BJ (cell line): ENCODE measurements at regions of chr17 and their contacts with region 1.

Region 1: DNA sequence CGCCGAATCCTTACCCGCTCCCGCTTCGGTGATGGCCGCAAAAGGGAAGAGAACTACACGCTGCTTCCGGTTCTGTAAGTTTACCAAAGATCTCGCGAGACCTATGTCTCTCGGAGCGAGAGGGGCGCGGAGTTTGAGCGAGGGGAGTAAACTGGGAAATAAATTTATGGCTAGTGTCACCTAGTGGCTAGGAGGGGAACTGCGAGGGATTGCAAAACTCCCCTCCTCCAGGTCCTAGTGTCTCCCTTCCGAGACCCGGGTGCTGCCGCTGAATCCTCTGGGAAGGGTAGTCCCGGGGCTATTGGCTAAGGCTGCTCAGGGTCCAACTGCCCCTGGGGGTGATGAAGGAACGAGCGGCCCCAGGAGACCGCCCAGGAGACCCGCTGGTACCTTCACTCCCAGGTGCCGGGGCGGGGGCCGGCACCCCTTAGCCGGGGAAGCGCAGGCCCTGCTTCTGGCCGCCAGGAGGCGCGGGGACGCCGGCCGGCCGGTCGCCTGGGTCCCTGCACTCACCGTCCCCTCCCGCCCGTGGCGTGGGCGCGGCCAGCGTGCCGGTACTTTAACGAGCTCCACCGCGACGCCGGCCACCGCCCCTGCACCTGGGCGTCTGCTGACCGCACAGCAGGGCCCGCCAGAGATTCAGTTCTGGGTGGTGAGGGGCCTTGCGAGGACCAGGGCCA is at the start of gene RPL26:
- DNase-seq: peak; percentile 91
- H3K4me3 ChIP-seq: peak within 1 kb of the TSS; percentile 57
- H3K27me3 ChIP-seq: no peaks in the 10 kb centered on the region
- CTCF ChIP-seq: peak; percentile 90
- polyA plus RNA-seq, gene RPL26: 2,021 and 3,734 TPM in 2 replicates

Region 2: GRCh38 chr17:8326511-8327302 is 56.6 kb before region 1 on chr17:
- CTCF ChIA-PET with region 1: interaction called, 10 read pairs
- POLR2A ChIA-PET with region 1: no interaction called
- DNase-seq: no peak
- H3K4me3 ChIP-seq: peak overlapping the region; percentile 42
- H3K27me3 ChIP-seq: 0 out of 2 replicates have a peak, but pooled peaks cover 1% of the 10 kb centered on the region
- CTCF ChIP-seq: no peak

Region 3: DNA sequence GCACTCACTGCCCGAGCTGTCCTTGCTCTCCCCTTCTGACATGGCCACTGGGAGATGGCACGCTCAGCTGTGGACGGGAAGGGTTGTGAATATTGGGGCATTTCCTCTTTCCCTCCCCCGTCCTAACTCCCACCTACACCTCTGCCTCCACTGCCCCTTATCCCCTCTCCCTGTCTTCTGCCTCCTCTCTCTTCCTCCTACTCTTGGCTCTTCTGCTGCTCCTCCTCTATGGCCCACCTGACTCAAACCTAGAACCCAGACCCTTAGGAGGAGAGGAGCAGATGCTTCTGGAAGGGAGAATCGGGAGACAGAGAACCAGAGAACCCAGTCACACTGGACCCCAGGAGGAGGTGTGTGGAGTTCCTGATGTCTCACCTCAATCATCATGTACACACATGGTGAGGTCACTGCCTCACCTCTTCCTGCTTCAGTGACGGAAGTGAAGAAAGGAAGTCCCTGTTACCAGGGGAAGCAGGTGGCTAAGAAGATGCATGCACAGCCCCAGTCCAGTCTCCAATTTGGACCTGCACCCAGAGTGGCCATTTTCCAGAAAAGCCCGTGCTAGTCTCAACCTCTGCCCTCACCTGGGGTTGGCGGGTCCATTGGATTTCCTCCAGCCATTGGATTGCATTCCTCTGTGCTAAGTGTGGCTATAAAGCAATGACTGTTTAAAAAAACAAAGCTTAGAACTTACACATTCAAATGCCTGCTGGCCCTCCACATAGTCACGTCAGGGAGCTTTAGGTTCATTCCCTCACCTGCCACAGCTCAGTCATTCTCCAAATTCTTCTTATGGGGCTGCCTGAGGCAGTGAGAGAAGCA is 10.3 kb after region 1 on chr17:
- CTCF ChIA-PET with region 1: interaction called, 10 read pairs
- POLR2A ChIA-PET with region 1: no interaction called
- DNase-seq: no peak
- H3K4me3 ChIP-seq: no peak overlapping the region
- H3K27me3 ChIP-seq: peaks cover 9% of the 10 kb centered on the region
- CTCF ChIP-seq: no peak

Region 4: DNA sequence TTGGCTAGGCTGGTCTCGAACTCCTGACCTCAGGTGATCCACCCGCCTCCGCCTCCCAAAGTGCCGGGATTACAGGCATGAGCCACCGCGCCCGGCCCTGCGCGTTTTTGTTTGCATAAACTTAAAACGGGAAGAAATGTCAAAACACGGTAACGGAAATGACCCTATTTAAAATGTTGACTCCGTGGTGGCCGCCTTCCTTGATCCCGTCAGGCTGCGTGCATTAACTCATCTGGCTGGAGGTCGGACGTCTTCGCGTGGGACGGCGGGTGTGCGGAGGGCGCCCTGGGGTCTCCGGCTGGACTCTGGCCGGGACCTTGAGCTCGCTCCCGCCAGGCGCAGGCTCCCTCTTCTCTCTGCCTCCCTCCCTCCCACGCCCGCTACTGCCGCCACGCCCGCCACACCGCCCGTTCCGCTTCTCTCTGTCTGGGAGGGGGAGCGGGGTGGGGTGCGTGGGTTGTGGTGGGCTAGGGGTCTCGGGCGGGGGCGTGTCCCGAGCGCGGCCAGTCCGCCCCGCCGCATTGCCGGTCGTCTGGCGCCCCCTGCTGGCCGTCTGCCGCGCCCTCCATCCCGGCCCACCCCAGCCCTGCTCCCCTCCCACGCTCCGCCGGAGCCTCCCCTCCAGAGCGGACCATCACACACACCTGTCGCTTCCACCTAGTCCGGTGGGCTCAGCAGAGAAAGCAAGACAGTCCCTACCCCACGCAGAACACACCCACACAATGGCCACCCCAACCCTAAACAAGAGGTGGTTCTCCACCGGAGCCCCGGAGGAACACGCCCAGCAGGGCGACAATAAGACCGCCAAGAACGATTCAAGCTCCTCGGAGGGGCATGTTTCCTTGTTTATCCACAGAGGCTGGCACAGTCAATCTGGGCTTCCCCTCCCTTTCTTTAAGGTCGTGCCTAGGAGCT is 362.6 kb after region 1 on chr17:
- CTCF ChIA-PET with region 1: interaction called, 13 read pairs
- POLR2A ChIA-PET with region 1: no interaction called
- DNase-seq: no peak
- H3K4me3 ChIP-seq: peak overlapping the region; percentile 69
- H3K27me3 ChIP-seq: peaks cover 3% of the 10 kb centered on the region
- CTCF ChIP-seq: peak; percentile 63